ENCODE measurements at regions of chr19 and their contacts with region 1.

Region 1: GRCh38 chr19:49640113-49640898 is at the start of gene RRAS:
- DNase-seq: peak; percentile 100
- H3K4me3 ChIP-seq: peak within 1 kb of the TSS; percentile 59
- H3K4me3 Mint-ChIP-seq: peak within 1 kb of the TSS; percentile 91
- H3K27ac Mint-ChIP-seq: peak within 1 kb of the TSS; percentile 100
- H3K4me1 ChIP-seq: peaks cover 7% of the 10 kb centered on the region
- H3K4me1 Mint-ChIP-seq: peaks cover 43% of the 10 kb centered on the region
- H3K27me3 ChIP-seq: no peaks in the 10 kb centered on the region
- H3K27me3 Mint-ChIP-seq: no peaks in the 10 kb centered on the region
- CTCF ChIP-seq: no peak
- total RNA-seq, gene RRAS: 10.6 and 11.3 TPM in 2 replicates

Region 2: GRCh38 chr19:49451430-49452181 is 188.7 kb before region 1 on chr19 and contains the start of gene PIH1D1:
- CTCF ChIA-PET with region 1: no interaction called
- POLR2A ChIA-PET with region 1: interaction called, 11 read pairs
- intact Hi-C with region 1: no loop called
- DNase-seq: peak; percentile 98 to 99
- H3K4me3 ChIP-seq: peak within 1 kb of the TSS; percentile 73
- H3K4me3 Mint-ChIP-seq: peak within 1 kb of the TSS; percentile 98
- H3K27ac Mint-ChIP-seq: peak within 1 kb of the TSS; percentile 100
- H3K4me1 ChIP-seq: peaks cover 6% of the 10 kb centered on the region; the same call in 1 of the 2 replicates
- H3K4me1 Mint-ChIP-seq: peaks cover 10% of the 10 kb centered on the region
- H3K27me3 ChIP-seq: no peaks in the 10 kb centered on the region
- H3K27me3 Mint-ChIP-seq: no peaks in the 10 kb centered on the region
- CTCF ChIP-seq: no peak
- total RNA-seq, gene PIH1D1: 150 and 167 TPM in 2 replicates

Region 3: DNA sequence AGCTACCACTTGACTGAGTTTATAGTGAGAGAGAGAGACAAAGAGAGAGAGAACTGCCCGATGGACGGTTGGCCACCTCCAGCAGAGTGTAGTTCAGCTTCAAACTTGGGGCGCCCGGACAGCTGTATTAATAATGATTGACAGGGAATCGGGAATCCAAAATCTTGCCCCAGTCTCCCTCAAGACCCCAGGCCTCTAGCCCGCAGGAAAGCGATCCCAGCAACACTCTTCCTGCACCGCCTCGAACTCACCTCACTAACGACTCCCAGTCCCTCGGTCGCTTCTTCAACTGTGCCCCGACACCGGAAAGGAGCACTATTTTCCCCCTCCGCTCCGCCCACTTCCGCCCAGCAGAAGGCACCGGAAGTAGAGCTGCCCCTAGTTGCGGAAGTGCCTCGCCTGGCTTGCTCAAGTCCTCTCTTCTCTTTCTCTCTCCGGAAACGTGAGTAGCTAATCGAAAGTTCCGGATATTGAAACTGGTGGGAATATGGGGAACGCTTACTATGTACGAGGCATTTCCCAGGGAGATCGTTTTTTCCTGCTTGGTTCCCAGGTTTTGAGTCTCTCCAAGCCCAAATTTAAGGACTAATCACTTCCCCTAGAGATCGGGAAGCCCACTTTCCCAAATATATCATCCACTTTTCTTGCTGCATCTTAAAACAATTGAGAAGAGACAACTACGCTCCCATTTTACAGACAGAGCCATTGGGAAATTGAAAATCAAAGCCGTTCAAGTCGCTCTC is 59.9 kb before region 1 on chr19 and contains the start of gene NOSIP:
- CTCF ChIA-PET with region 1: interaction called, 7 read pairs
- POLR2A ChIA-PET with region 1: interaction called, 34 read pairs
- intact Hi-C with region 1: no loop called
- DNase-seq: peak; percentile 97
- H3K4me3 ChIP-seq: peak within 1 kb of the TSS; percentile 99
- H3K4me3 Mint-ChIP-seq: peak within 1 kb of the TSS; percentile 95
- H3K27ac Mint-ChIP-seq: peak within 1 kb of the TSS; percentile 93
- H3K4me1 ChIP-seq: 0 out of 2 replicates have a peak, but pooled peaks cover 4% of the 10 kb centered on the region
- H3K4me1 Mint-ChIP-seq: no peaks in the 10 kb centered on the region
- H3K27me3 ChIP-seq: no peaks in the 10 kb centered on the region
- H3K27me3 Mint-ChIP-seq: no peaks in the 10 kb centered on the region
- CTCF ChIP-seq: no peak
- total RNA-seq, gene NOSIP: 74.7 and 77.7 TPM in 2 replicates

Region 4: GRCh38 chr19:49595819-49596404 is 44.4 kb before region 1 on chr19:
- CTCF ChIA-PET with region 1: interaction called, 9 read pairs
- POLR2A ChIA-PET with region 1: interaction called, 18 read pairs
- intact Hi-C with region 1: no loop called
- DNase-seq: no peak
- H3K4me3 ChIP-seq: no peak overlapping the region
- H3K4me3 Mint-ChIP-seq: no peak overlapping the region
- H3K27ac Mint-ChIP-seq: no peak overlapping the region
- H3K4me1 ChIP-seq: peaks cover 10% of the 10 kb centered on the region
- H3K4me1 Mint-ChIP-seq: peaks cover 23% of the 10 kb centered on the region
- H3K27me3 ChIP-seq: no peaks in the 10 kb centered on the region
- H3K27me3 Mint-ChIP-seq: no peaks in the 10 kb centered on the region
- CTCF ChIP-seq: no peak

Region 5: GRCh38 chr19:49766007-49766937 is 126.0 kb after region 1 on chr19:
- CTCF ChIA-PET with region 1: no interaction called
- POLR2A ChIA-PET with region 1: interaction called, 9 read pairs
- intact Hi-C with region 1: loop called (anchors 2 kb)
- DNase-seq: peak; percentile 100
- H3K4me3 ChIP-seq: peak overlapping the region; percentile 44
- H3K4me3 Mint-ChIP-seq: peak overlapping the region; percentile 86
- H3K27ac Mint-ChIP-seq: peak overlapping the region; percentile 78
- H3K4me1 ChIP-seq: peaks cover 17% of the 10 kb centered on the region
- H3K4me1 Mint-ChIP-seq: peaks cover 24% of the 10 kb centered on the region
- H3K27me3 ChIP-seq: no peaks in the 10 kb centered on the region
- H3K27me3 Mint-ChIP-seq: no peaks in the 10 kb centered on the region
- CTCF ChIP-seq: no peak

Measured in Caco-2 (cell line).